Right cardiac atrium (tissue), 5 donors: ENCODE measurements at regions of chr4 and their contacts with region 1.

Region 1: GRCh38 chr4:72468904-72469502 is 100.0 kb downstream of the ADAMTS3 start:
- DNase-seq: no peak
- ATAC-seq: no peak
- H3K4me3 ChIP-seq: no peak overlapping the region
- H3K27ac ChIP-seq: no peak overlapping the region
- H3K4me1 ChIP-seq: no peaks in the 10 kb centered on the region
- H3K27me3 ChIP-seq: no peaks in the 10 kb centered on the region

Region 2: GRCh38 chr4:71833232-71833900 is 635.6 kb before region 1 on chr4:
- intact Hi-C with region 1: no loop called
- DNase-seq: peak in 1 of 3 donors; percentile 23
- ATAC-seq: peak; percentile 42 to 64
- H3K4me3 ChIP-seq: no peak overlapping the region
- H3K27ac ChIP-seq: no peak overlapping the region
- H3K4me1 ChIP-seq: no peaks in the 10 kb centered on the region
- H3K27me3 ChIP-seq: no peaks in the 10 kb centered on the region

Region 3: DNA sequence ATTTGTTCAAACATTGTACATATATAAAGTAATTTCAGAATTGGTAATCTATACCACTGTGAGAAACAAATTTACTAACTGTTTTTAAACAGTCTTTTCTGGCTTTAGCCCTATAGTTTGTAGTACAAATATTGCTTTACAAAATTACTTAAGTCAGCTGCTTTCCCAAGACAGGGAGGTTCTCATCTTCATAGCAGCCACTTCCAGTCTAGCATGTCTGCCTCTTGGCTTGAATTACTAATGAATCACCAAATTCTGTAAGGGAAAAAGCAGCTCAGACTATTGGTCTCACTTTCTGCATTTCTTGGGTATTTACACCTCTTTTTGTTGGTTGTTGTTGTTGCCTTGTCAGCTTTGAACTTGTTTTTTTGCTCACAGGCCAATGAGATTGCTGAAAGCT is 250.1 kb before region 1 on chr4:
- intact Hi-C with region 1: no loop called
- DNase-seq: no peak
- ATAC-seq: no peak
- H3K4me3 ChIP-seq: no peak overlapping the region
- H3K27ac ChIP-seq: no peak overlapping the region
- H3K4me1 ChIP-seq: no peaks in the 10 kb centered on the region
- H3K27me3 ChIP-seq: no peaks in the 10 kb centered on the region

Region 4: GRCh38 chr4:72295966-72296557 is 172.9 kb before region 1 on chr4:
- intact Hi-C with region 1: loop called in 1 of 4 experiments (anchors 10 kb)
- DNase-seq: no peak
- ATAC-seq: peak; percentile 66 to 80
- H3K4me3 ChIP-seq: no peak overlapping the region
- H3K27ac ChIP-seq: no peak overlapping the region
- H3K4me1 ChIP-seq: no peaks in the 10 kb centered on the region
- H3K27me3 ChIP-seq: no peaks in the 10 kb centered on the region

Region 5: GRCh38 chr4:72326692-72327632 is 142.0 kb before region 1 on chr4:
- intact Hi-C with region 1: loop called (anchors 5 kb)
- DNase-seq: no peak
- ATAC-seq: no peak
- H3K4me3 ChIP-seq: no peak overlapping the region
- H3K27ac ChIP-seq: no peak overlapping the region
- H3K4me1 ChIP-seq: no peaks in the 10 kb centered on the region
- H3K27me3 ChIP-seq: no peaks in the 10 kb centered on the region

Region 6: GRCh38 chr4:73142995-73143547 is 674.1 kb after region 1 on chr4:
- intact Hi-C with region 1: no loop called
- DNase-seq: no peak
- ATAC-seq: no peak
- H3K4me3 ChIP-seq: no peak overlapping the region
- H3K27ac ChIP-seq: no peak overlapping the region
- H3K4me1 ChIP-seq: no peaks in the 10 kb centered on the region
- H3K27me3 ChIP-seq: no peaks in the 10 kb centered on the region